ENCODE measurements at regions of chr10 and their contacts with region 1.

Region 1: DNA sequence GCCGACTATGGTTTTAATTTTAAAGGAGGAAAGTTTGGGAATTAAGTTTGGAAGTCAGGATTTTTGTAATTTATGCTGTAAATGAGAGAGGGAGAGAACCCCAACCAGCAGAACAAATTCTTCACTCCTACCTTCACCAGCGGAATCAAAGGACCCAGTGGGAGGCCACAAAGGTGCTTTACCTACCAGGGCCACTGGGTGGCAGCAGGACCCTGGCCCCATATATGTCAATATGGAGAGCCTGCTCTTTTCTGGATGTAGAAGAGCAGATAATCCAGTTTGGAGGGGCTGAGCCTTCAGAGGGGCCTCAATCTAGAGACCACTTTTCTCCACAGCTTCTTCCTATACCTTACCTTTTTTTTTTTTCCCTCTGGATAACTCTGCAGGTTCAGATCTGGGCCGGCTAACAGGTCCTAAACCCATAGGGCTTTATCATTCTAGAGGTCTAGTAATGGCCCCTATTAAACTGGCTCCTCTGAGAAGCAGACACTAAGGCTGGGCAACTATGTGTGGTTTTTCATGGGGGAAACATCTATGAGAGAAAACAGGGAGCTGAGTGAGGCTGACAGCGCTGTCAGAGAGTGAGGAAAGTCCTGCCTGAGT is 8.5 kb upstream of the SCD start:
- DNase-seq: peak; percentile 85 to 89
- H3K4me3 ChIP-seq: no peak overlapping the region
- H3K27ac ChIP-seq: no peak overlapping the region
- H3K4me1 ChIP-seq: peaks cover 0 to 10% (median 3%) of the 10 kb centered on the region in 4 donors
- H3K27me3 ChIP-seq: peaks cover 0 to 19% (median 0%) of the 10 kb centered on the region in 3 donors
- CTCF ChIP-seq: peak in 5 of 7 experiments; percentile 64 to 93 (median 87)
- EP300 ChIP-seq: no peak
- POLR2A ChIP-seq: no peak

Region 2: GRCh38 chr10:100433253-100434240 is 95.0 kb after region 1 on chr10:
- intact Hi-C with region 1: loop called (anchors 2 kb)
- DNase-seq: peak; percentile 96 to 98
- H3K4me3 ChIP-seq: no peak overlapping the region
- H3K27ac ChIP-seq: no peak overlapping the region
- H3K4me1 ChIP-seq: no peaks in the 10 kb centered on the region
- H3K27me3 ChIP-seq: no peaks in the 10 kb centered on the region
- CTCF ChIP-seq: peak in 6 of 7 experiments; percentile 97 to 100 (median 99)
- EP300 ChIP-seq: no peak
- POLR2A ChIP-seq: no peak

Region 3: GRCh38 chr10:100508691-100509150 is 170.2 kb after region 1 on chr10:
- intact Hi-C with region 1: loop called (anchors 10 kb)
- DNase-seq: peak in 1 of 2 donors; percentile 78
- H3K4me3 ChIP-seq: no peak overlapping the region
- H3K27ac ChIP-seq: no peak overlapping the region
- H3K4me1 ChIP-seq: peaks cover 3 to 16% (median 12%) of the 10 kb centered on the region in 4 donors
- H3K27me3 ChIP-seq: no peaks in the 10 kb centered on the region
- CTCF ChIP-seq: peak in 3 of 7 experiments; percentile 15 to 55 (median 38)
- EP300 ChIP-seq: no peak
- POLR2A ChIP-seq: no peak

Region 4: DNA sequence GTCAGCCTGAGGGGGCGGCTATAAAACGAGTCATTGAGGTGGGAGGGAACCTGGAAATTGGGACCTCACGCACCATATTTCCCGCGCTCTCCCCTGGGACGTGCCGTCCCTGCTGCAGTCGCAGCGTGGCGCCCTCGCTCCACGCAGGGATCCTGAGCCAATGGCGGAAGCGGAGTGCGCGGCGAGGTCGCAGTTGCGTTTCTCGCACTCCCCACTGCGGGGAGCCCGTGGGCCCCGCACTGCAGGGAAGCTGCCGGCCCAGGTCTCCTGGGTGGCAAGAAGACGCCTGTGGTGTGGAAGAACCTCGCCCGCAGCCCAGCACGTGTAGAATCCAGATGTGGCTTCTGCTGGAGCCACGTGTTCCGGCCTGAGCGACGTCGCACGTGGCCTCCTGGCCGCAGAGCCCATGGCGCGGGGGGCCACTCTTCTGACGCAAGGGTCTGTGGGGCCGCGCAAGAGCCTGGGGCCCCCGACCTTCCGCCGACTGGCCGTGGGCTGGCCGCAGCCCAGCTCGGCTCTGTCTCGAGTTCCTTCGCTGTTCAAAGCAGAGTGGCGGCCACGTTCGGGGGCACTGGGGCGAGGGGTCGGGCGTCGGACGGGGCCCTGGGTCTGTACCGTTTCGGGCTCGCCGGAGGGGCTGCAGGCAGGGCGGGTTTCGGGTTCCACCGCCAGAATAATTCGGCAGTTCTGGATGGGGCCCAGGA is 223.6 kb after region 1 on chr10:
- intact Hi-C with region 1: no loop called
- DNase-seq: peak; percentile 74 to 92
- H3K4me3 ChIP-seq: peak overlapping the region in 2 of 4 donors; percentile 5 to 36
- H3K27ac ChIP-seq: no peak overlapping the region
- H3K4me1 ChIP-seq: peaks cover 13 to 16% (median 15%) of the 10 kb centered on the region in 4 donors
- H3K27me3 ChIP-seq: peaks cover 4 to 68% (median 39%) of the 10 kb centered on the region in 3 donors
- CTCF ChIP-seq: peak in 5 of 7 experiments; percentile 58 to 97 (median 69)
- EP300 ChIP-seq: no peak
- POLR2A ChIP-seq: no peak

Measured in stomach (tissue), 19 donors.